ENCODE measurements at regions of chr11 and their contacts with region 1.

Region 1: DNA sequence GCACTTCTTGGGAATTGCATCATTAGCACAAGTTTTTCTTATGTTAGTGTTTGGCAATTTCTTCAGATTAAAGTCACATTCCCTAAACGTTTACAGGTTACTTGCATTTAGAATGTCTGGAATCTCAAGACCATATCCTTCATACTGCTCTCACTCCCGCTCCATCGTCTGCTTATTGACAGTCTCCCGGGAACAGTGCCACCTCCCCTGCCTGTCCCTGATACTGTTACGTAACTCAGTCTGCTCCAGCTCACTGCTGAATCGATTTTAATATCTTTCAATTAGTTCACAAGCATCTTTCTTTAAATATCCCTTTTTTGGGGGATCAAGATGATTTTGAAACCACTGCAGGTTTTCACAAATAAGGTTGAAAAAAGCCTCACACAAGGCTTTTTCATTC is 48.2 kb downstream of the GLYATL2 start:
- DNase-seq: no peak
- ATAC-seq: no peak

Region 2: DNA sequence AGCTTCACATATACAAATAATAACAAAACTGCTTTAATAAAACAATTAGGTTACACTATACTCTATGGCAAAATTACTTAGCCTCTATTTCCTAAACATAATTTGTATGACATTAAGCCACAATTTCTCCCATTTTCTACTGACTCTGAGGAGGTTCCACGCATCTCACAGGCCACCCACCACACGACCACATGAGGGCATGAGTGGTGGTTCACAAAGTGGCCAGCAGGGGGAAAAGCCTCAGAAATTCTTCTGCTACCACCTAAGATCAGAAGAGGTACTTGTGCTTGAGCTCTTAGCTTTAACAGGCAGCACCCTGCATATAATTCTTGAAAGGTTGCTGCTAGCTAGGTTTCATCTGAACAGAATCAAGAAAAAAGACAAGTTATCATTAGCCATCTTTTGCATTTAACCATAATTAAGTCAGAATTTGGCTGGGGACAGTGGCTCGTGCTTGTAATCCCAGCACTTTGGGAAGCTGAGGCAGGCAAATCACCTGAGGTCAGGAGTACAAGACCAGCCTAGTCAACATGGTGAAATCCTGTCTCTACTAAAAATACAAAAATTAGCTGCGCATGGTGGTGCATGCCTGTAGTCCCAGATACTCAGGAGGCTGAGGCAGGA is 228.3 kb before region 1 on chr11:
- intact Hi-C with region 1: loop called (anchors 10 kb)
- DNase-seq: no peak
- ATAC-seq: no peak

Measured in Right ventricle myocardium inferior (tissue), 1 donor.